Motor neuron (in vitro differentiated cells): ENCODE measurements at regions of chr1 and their contacts with region 1.

Region 1: DNA sequence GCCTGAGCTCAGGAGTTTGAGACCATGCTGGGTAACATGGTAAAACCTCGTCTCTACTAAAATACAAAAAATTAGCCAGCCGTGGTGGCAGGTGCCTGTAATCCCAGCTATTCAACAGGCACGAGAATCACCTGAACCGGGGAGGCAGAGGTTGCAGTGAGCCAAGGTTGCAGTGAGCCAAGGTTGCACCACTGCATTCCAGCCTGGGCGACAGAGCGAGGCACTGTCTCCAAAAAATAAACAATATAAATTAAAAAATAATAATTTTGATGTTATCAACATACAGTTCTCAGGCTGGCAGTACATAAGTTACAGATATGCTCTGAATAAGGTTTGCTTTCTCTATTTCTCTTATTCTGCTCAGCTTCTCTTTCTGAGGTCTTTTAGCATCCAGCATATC is 27.6 kb downstream of the GON4L start:
- ATAC-seq: no peak
- H3K4me3 ChIP-seq: no peak overlapping the region
- H3K27ac ChIP-seq: no peak overlapping the region
- H3K4me1 ChIP-seq: peaks cover 0 to 8% of the 10 kb centered on the region in 2 donors

Region 2: GRCh38 chr1:155759966-155760630 is 69.3 kb before region 1 on chr1:
- in situ Hi-C with region 1: loop called in 1 of 9 experiments (anchors 10 kb)
- ATAC-seq: no peak
- H3K4me3 ChIP-seq: no peak overlapping the region
- H3K27ac ChIP-seq: no peak overlapping the region
- H3K4me1 ChIP-seq: no peaks in the 10 kb centered on the region

Region 3: GRCh38 chr1:156136970-156137483 is 307.6 kb after region 1 on chr1:
- in situ Hi-C with region 1: no loop called
- ATAC-seq: no peak
- H3K4me3 ChIP-seq: no peak overlapping the region
- H3K27ac ChIP-seq: no peak overlapping the region
- H3K4me1 ChIP-seq: no peaks in the 10 kb centered on the region